RWPE1 (cell line): ENCODE measurements at regions of chr15 and their contacts with region 1.

Region 1: GRCh38 chr15:44663409-44664308 is at the start of gene SPG11:
- DNase-seq: peak; percentile 93
- H3K27ac ChIP-seq: peak within 1 kb of the TSS; percentile 90
- CTCF ChIP-seq: peak; percentile 95

Region 2: GRCh38 chr15:44441095-44441501 is 222.6 kb before region 1 on chr15:
- CTCF ChIA-PET with region 1: no interaction called
- POLR2A ChIA-PET with region 1: no interaction called
- DNase-seq: no peak
- H3K27ac ChIP-seq: no peak overlapping the region
- CTCF ChIP-seq: no peak

Region 3: DNA sequence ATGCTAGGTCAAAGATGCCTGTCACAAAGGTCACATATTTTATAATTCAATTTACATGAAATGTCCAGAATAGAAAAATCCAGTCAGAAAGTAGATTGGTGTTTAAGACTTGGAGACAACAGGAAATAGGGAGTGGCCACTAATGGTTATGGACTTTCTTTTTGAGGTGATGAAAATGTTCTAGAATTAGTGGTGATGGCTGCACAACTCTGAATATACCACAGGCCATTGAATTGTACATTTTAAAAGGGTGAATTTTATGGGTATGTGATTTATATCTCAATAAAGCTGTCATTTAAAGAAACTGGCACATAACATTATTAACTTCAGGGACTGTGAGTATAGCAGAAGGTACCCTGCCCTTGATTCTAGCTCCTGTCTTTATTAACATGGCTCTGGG is 16.0 kb before region 1 on chr15:
- CTCF ChIA-PET with region 1: interaction called, 3 read pairs
- POLR2A ChIA-PET with region 1: interaction called, 14 read pairs
- DNase-seq: no peak
- H3K27ac ChIP-seq: no peak overlapping the region
- CTCF ChIP-seq: no peak

Region 4: DNA sequence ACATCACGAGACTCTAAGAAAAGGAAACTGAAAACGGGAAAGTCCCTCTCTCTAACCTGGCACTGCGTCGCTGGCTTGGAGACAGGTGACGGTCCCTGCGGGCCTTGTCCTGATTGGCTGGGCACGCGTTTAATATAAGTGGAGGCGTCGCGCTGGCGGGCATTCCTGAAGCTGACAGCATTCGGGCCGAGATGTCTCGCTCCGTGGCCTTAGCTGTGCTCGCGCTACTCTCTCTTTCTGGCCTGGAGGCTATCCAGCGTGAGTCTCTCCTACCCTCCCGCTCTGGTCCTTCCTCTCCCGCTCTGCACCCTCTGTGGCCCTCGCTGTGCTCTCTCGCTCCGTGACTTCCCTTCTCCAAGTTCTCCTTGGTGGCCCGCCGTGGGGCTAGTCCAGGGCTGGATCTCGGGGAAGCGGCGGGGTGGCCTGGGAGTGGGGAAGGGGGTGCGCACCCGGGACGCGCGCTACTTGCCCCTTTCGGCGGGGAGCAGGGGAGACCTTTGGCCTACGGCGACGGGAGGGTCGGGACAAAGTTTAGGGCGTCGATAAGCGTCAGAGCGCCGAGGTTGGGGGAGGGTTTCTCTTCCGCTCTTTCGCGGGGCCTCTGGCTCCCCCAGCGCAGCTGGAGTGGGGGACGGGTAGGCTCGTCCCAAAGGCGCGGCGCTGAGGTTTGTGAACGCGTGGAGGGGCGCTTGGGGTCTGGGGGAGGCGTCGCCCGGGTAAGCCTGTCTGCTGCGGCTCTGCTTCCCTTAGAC is 47.9 kb after region 1 on chr15 and contains the start of gene B2M:
- CTCF ChIA-PET with region 1: interaction called, 3 read pairs
- POLR2A ChIA-PET with region 1: interaction called, 14 read pairs
- DNase-seq: peak; percentile 98
- H3K27ac ChIP-seq: peak within 1 kb of the TSS; percentile 88
- CTCF ChIP-seq: no peak

Region 5: GRCh38 chr15:44738340-44738984 is 74.8 kb after region 1 on chr15:
- CTCF ChIA-PET with region 1: interaction called, 16 read pairs
- POLR2A ChIA-PET with region 1: no interaction called
- DNase-seq: peak; percentile 51
- H3K27ac ChIP-seq: no peak overlapping the region
- CTCF ChIP-seq: peak; percentile 85